Activated CD4-positive, alpha-beta memory T cell treated with anti-CD3 and anti-CD28 coated beads for 36 hours (primary cell): ENCODE measurements at regions of chr4 and their contacts with region 1.

Region 1: GRCh38 chr4:176195184-176195978 is at the start of gene SPATA4:
- DNase-seq: peak; percentile 97
- H3K4me3 Mint-ChIP-seq: peak within 1 kb of the TSS; percentile 77
- H3K27ac Mint-ChIP-seq: peak within 1 kb of the TSS; percentile 70
- H3K4me1 Mint-ChIP-seq: peaks cover 28% of the 10 kb centered on the region
- H3K27me3 Mint-ChIP-seq: peaks cover 26% of the 10 kb centered on the region
- total RNA-seq, gene SPATA4: not detected

Region 2: GRCh38 chr4:176065435-176066291 is 129.7 kb before region 1 on chr4 and contains the start of gene WDR17:
- CTCF ChIA-PET with region 1: no interaction called
- POLR2A ChIA-PET with region 1: no interaction called
- intact Hi-C with region 1: loop called (anchors 1 kb)
- DNase-seq: peak; percentile 83
- H3K4me3 Mint-ChIP-seq: peak within 1 kb of the TSS; percentile 75
- H3K27ac Mint-ChIP-seq: no peak within 1 kb of the TSS
- H3K4me1 Mint-ChIP-seq: peaks cover 12% of the 10 kb centered on the region
- H3K27me3 Mint-ChIP-seq: peaks cover 17% of the 10 kb centered on the region
- total RNA-seq, gene WDR17: 1.1 to 1.2 TPM

Region 3: GRCh38 chr4:176123710-176124407 is 71.5 kb before region 1 on chr4:
- CTCF ChIA-PET with region 1: no interaction called
- POLR2A ChIA-PET with region 1: no interaction called
- intact Hi-C with region 1: loop called (anchors 1 kb)
- DNase-seq: no peak
- H3K4me3 Mint-ChIP-seq: no peak overlapping the region
- H3K27ac Mint-ChIP-seq: no peak overlapping the region
- H3K4me1 Mint-ChIP-seq: peaks cover 10% of the 10 kb centered on the region
- H3K27me3 Mint-ChIP-seq: peaks cover 4% of the 10 kb centered on the region

Region 4: GRCh38 chr4:176319704-176320339 is 124.4 kb after region 1 on chr4 and contains the start of gene SPCS3:
- CTCF ChIA-PET with region 1: no interaction called
- POLR2A ChIA-PET with region 1: no interaction called
- intact Hi-C with region 1: loop called (anchors 1 kb)
- DNase-seq: peak; percentile 95
- H3K4me3 Mint-ChIP-seq: peak within 1 kb of the TSS; percentile 85
- H3K27ac Mint-ChIP-seq: peak within 1 kb of the TSS; percentile 89
- H3K4me1 Mint-ChIP-seq: peaks cover 35% of the 10 kb centered on the region
- H3K27me3 Mint-ChIP-seq: no peaks in the 10 kb centered on the region
- total RNA-seq, gene SPCS3: 182 to 185 TPM

Region 5: DNA sequence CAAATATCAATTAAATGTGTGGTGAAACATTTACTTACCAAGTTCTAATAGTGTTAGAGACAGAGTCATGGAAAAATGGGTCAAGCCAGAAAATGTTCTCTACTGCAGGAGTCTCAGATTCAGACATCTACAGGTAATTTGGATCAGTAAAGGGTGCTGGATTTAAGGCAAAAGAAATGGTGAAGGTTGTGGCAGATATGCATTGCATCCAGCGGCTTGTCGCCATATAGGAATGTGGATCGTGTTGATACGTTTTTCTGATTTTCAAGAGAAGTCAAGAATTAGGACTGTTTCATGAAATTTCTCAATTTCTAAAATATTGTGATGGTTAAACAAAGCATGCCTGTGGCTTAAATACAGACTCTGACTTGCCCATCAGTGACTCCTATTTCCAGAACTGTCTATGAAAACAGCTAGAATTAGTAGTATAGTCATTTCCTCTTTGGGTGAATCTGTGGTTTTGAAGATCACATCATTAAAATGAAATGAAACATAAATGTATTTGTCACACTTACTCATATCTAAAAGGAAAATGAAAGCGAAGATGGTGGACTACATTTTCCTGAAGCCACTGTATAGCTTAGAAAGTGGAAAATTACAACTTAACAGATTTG is 707.4 kb after region 1 on chr4:
- CTCF ChIA-PET with region 1: no interaction called
- POLR2A ChIA-PET with region 1: no interaction called
- intact Hi-C with region 1: loop called (anchors 2 kb)
- DNase-seq: no peak
- H3K4me3 Mint-ChIP-seq: no peak overlapping the region
- H3K27ac Mint-ChIP-seq: no peak overlapping the region
- H3K4me1 Mint-ChIP-seq: peaks cover 3% of the 10 kb centered on the region
- H3K27me3 Mint-ChIP-seq: no peaks in the 10 kb centered on the region

Region 6: GRCh38 chr4:177309522-177310371 is 1114.4 kb after region 1 on chr4 and contains the start of gene NEIL3:
- CTCF ChIA-PET with region 1: no interaction called
- POLR2A ChIA-PET with region 1: no interaction called
- intact Hi-C with region 1: loop called (anchors 1 kb)
- DNase-seq: peak; percentile 97
- H3K4me3 Mint-ChIP-seq: peak within 1 kb of the TSS; percentile 92
- H3K27ac Mint-ChIP-seq: peak within 1 kb of the TSS; percentile 79
- H3K4me1 Mint-ChIP-seq: peaks cover 25% of the 10 kb centered on the region
- H3K27me3 Mint-ChIP-seq: no peaks in the 10 kb centered on the region
- total RNA-seq, gene NEIL3: 18.2 to 18.3 TPM

Region 7: DNA sequence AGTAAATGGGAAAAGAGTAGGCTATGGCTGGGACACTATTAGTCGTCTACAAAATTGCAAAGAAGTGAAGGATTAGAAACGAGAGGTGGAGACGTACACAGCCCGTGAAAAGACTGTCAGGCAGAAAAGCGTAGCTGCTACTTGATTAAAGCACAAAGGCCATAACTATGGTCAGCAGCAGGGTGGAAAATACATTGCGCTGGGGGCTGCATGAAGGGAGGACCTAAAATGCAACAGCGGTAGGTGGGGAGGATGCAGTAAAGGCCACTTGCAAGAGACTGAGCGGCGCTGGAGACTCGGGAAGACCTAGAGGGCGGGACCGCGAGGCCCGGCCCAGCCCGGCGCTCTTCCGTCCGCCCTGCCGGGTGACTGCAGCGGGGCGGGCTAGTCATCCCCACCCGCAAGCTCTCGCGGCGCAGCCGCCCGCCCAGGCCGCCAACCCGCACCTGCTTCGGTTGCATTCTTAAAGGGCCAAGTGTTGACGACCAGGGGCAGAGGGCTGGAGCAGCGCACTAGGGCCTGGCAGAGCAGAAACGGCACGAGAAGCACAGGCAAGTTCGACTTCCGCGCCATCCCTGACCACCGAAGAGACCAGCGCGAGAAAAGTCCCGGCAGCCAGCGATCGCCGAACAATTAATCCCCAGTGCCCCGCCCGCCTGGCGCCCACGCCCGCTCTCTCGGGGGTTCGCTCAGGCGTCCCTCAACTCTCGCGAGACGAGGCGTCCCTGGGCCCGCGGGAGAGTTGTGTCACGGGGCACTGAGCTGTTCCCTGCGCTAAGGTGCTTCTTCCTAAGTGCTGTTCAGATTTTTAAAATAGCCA is 1246.6 kb after region 1 on chr4 and contains the start of gene AGA:
- CTCF ChIA-PET with region 1: no interaction called
- POLR2A ChIA-PET with region 1: interaction called, 3 read pairs
- intact Hi-C with region 1: loop called (anchors 2 kb)
- DNase-seq: peak; percentile 97
- H3K4me3 Mint-ChIP-seq: peak within 1 kb of the TSS; percentile 90
- H3K27ac Mint-ChIP-seq: peak within 1 kb of the TSS; percentile 97
- H3K4me1 Mint-ChIP-seq: peaks cover 24% of the 10 kb centered on the region
- H3K27me3 Mint-ChIP-seq: no peaks in the 10 kb centered on the region
- total RNA-seq, gene AGA: 22.1 to 22.5 TPM